Left ventricle myocardium superior (tissue), 1 donor: ENCODE measurements at regions of chr9 and their contacts with region 1.

Region 1: DNA sequence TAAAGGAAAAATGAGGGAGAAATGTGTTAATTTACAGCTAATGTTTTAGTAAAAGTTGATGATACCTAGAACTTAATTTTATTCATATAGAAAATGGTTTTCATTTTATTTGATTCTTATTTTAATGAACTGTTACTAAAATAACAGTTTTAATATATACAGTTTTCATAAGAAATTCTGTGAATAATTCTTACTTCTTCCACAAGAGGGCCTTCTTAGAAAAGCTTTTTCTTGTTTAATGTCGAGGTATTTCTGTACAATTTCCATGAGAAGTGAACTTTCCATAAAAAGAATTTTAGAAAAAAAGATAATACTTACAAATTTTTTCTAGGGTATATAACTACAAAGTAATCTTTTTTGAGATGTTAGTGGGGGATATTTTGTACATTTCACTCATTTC is 73.9 kb downstream of the KLF9 start:
- DNase-seq: no peak
- ATAC-seq: no peak

Region 2: DNA sequence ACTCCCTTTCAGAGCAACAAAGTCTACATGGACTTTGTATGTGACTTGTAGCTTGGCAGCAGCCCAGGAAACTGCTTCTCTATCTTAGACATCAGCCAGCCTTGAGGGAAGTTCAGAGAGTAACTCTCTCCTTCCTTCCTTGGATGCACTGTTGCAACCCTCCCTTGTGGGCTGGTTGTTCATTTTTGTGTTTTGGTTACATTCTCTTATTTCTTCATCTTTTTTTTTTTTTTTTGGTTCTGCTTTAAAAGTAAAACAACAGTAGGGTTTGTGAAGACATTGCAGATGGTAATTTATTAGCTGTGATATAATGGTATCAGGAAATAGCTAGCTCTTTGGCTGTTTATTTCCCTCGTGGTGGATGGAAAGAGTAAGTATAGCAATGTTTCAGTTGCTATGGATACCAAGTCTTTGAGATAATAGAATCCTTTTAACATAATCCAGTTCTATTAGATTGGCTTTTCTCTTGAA is 394.9 kb before region 1 on chr9:
- intact Hi-C with region 1: no loop called
- DNase-seq: peak; percentile 43
- ATAC-seq: peak; percentile 76

Region 3: GRCh38 chr9:70177121-70177520 is 163.5 kb before region 1 on chr9:
- intact Hi-C with region 1: no loop called
- DNase-seq: no peak
- ATAC-seq: no peak

Region 4: GRCh38 chr9:70263421-70263820 is 77.2 kb before region 1 on chr9:
- intact Hi-C with region 1: no loop called
- DNase-seq: no peak
- ATAC-seq: peak; percentile 29

Region 5: DNA sequence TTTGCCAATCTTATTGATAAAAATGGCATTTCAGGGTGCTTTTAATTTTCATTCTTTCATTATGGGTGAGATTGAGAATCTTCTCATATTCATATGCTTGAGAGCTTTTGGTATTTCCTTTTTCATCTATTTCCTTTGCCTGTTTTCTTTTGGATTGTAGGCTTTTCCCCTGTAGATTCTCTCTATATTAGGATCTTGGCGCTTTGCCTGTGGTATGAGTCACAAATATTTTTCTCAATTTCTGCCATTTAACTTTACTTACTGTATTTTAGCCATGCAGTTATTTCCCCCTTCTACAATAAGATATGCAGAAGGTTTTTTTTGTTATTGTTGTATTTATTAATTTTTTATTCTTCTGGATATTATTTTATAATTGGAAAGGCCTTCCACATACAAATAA is 95.4 kb after region 1 on chr9:
- intact Hi-C with region 1: no loop called
- DNase-seq: no peak
- ATAC-seq: no peak

Region 6: GRCh38 chr9:70504834-70505233 is 164.3 kb after region 1 on chr9:
- intact Hi-C with region 1: loop called (anchors 10 kb)
- DNase-seq: no peak
- ATAC-seq: peak; percentile 25

Region 7: DNA sequence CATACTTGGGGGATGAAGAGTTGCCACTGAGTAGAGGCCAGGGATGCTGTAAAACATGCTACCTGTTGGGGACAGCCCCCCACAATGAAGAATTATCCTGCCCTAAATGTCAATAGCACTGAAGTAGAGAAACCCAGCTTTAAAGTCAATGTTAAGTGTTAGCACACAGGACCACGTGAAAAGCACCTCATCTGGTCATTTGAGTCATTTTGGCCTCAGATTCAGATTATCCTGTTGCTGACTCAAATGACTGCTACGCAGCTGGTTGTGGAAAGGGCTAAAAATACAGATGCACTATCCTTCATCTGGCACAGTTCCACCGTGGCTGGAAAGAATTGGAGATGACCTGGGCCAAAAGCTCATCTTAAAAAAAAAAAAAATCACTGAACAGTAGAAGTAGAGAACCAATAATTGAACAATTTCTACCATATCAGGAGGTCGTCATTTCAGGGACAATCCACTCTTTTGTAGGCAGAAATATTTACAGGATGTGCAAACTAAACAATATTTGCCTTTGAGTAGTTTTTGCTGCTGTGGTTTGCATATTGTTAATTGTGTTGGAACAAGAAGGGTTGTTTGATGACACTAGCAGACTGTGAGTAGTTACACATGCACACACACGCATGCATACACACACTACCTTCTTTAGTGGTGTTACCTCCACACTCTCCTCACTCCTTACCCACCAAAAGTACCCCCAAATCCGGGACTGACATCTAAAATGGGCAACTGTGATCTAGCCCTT is 269.1 kb after region 1 on chr9:
- intact Hi-C with region 1: loop called (anchors 5 kb)
- DNase-seq: no peak
- ATAC-seq: peak; percentile 77